ENCODE measurements at regions of chr18 and their contacts with region 1.

Region 1: GRCh38 chr18:36441426-36442240 is 144.1 kb downstream of the FHOD3 start:
- DNase-seq: peak; percentile 73
- H3K4me3 Mint-ChIP-seq: peak overlapping the region; percentile 22
- H3K27ac Mint-ChIP-seq: peak overlapping the region; percentile 28
- H3K4me1 Mint-ChIP-seq: peaks cover 47% of the 10 kb centered on the region
- H3K27me3 Mint-ChIP-seq: no peaks in the 10 kb centered on the region
- CTCF ChIP-seq: no peak

Region 2: DNA sequence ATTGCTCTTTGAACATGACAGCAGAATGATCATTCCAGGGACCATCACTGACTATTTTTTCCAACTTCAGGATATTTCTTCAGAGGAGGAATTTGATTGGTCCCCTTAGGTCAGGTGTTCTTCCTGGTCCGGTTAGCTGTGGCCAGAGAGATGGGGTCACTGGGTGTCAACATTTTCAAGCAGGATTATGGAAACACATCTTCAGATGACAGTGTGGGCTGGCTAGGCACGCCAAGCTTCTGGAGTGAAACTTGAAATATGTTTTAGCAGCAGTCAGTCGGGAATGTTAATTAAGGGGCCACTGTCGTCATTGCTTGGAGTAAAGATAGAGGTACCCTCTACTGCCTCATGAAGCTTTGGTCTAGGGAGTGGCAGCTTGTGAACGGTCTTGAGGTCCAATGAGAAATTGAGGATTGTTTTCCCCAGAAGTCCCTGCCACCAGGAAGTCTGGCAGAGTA is 12.9 kb before region 1 on chr18:
- CTCF ChIA-PET with region 1: no interaction called
- POLR2A ChIA-PET with region 1: interaction called, 10 read pairs
- intact Hi-C with region 1: no loop called
- DNase-seq: no peak
- H3K4me3 Mint-ChIP-seq: no peak overlapping the region
- H3K27ac Mint-ChIP-seq: no peak overlapping the region
- H3K4me1 Mint-ChIP-seq: peaks cover 6% of the 10 kb centered on the region
- H3K27me3 Mint-ChIP-seq: no peaks in the 10 kb centered on the region
- CTCF ChIP-seq: no peak

Measured in MCF 10A (cell line).